ENCODE measurements at regions of chr4 and their contacts with region 1.

Region 1: GRCh38 chr4:87679449-87680169 is 29.5 kb downstream of the DMP1 start:
- DNase-seq: peak in 7 of 9 experiments; percentile 9 to 57 (median 22)
- ATAC-seq: no peak
- H3K4me3 ChIP-seq: no peak overlapping the region
- H3K4me3 Mint-ChIP-seq: no peak overlapping the region
- H3K27ac ChIP-seq: no peak overlapping the region
- H3K27ac Mint-ChIP-seq: no peak overlapping the region
- H3K4me1 ChIP-seq: no peaks in the 10 kb centered on the region
- H3K4me1 Mint-ChIP-seq: no peaks in the 10 kb centered on the region
- H3K27me3 ChIP-seq: no peaks in the 10 kb centered on the region
- H3K27me3 Mint-ChIP-seq: peaks cover 2% of the 10 kb centered on the region
- CTCF ChIP-seq: peak; percentile 83

Region 2: DNA sequence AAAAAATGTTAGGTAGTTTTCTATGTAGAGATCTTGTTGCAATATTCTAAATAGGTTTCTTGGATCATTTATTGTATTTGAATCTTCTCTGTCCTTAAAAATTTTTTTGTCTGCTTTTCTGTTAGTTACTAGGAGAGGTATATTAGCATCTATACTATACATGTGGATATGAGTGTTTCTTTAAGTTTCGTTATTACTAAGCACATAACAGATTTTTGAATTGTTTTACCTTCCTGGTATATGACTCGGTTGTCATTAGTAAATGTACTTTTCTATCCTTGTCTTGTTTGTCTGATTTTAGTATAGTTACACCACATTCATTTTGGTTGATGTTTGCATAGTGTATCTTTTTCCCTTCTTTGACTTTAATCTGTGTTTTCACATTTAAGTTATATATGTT is 823.7 kb after region 1 on chr4:
- CTCF ChIA-PET with region 1: no interaction called
- POLR2A ChIA-PET with region 1: no interaction called
- intact Hi-C with region 1: loop called in 1 of 2 experiments (anchors 10 kb)
- DNase-seq: no peak
- ATAC-seq: no peak
- H3K4me3 ChIP-seq: no peak overlapping the region
- H3K4me3 Mint-ChIP-seq: no peak overlapping the region
- H3K27ac ChIP-seq: no peak overlapping the region
- H3K27ac Mint-ChIP-seq: no peak overlapping the region
- H3K4me1 ChIP-seq: no peaks in the 10 kb centered on the region
- H3K4me1 Mint-ChIP-seq: no peaks in the 10 kb centered on the region
- H3K27me3 ChIP-seq: no peaks in the 10 kb centered on the region
- H3K27me3 Mint-ChIP-seq: no peaks in the 10 kb centered on the region
- CTCF ChIP-seq: no peak